Adrenal gland (tissue), 19 donors: ENCODE measurements at regions of chr6 and their contacts with region 1.

Region 1: DNA sequence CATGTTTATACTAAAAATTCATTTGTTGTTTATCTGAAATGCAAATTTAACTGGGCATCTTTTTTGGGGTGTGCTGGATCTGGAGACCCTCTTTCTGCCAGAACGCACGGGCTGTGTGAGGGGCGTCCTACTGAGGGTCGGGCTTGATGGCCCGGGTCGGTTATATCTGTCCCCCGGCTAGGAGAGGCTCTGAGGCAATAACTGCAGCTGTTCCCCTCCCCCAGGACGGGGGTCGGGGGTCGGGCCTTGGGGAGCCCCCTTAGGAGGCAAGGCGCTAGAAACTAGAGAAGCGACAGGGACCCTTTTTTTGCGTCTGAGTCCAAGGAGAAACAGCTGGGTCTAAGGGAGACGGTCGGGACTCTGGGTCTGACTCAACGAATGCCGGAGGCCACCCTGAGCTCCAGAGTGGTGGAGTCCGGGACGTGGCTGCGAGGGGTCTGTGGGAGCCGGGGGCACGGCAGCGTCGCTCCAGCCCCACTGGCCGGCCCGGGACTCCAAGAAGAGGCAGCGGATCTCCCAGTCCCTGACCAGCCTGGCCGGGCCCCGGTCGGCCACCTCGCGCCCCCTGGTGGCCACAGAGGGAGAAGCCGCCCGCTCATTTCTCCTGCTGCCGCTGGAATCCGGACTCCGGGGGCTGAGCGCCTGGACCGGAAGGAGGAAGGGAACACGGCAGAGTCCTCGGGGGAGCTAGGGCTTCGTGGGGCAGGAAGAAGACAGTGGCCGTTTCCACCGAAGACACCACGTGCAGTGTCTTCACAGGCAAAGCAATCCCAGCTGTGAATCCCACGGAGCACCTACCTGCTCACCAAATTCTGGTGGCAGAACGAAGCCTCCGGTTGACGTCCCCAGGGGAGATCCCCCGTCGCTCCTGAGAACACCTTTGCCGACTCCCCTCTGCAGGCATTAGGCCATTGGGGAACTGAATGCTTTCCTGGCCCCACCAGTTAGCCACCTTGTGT is 24.0 kb upstream of the SCML4 start:
- DNase-seq: peak; percentile 82 to 92 (median 87)
- H3K4me3 ChIP-seq: peak overlapping the region in 2 of 4 donors; percentile 16 to 56
- H3K27ac ChIP-seq: no peak overlapping the region
- H3K4me1 ChIP-seq: peaks cover 0 to 11% of the 10 kb centered on the region in 2 donors
- H3K27me3 ChIP-seq: no peaks in the 10 kb centered on the region
- CTCF ChIP-seq: peak; percentile 84 to 99 (median 94)
- POLR2A ChIP-seq: no peak

Region 2: DNA sequence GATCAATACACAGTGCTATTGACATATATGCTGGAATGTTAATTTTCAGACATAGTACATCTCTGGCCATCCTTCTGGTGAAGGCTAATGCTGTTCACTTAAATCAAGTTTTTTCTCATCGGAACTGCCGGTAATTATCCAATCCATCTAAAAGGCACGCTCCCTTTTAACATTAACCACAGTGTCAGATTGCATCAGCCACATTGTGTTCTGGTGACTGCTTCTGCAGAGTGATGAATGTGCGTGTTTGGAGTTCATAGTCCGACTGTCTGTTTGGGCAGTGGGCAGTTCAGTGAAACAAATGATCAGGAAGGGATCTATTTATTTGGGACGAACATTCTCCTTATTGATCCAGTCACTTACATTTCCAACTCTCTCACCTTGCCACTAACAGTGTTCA is 308.7 kb before region 1 on chr6:
- intact Hi-C with region 1: no loop called
- DNase-seq: no peak
- H3K4me3 ChIP-seq: no peak overlapping the region
- H3K27ac ChIP-seq: no peak overlapping the region
- H3K4me1 ChIP-seq: no peaks in the 10 kb centered on the region
- H3K27me3 ChIP-seq: no peaks in the 10 kb centered on the region
- CTCF ChIP-seq: no peak
- POLR2A ChIP-seq: no peak

Region 3: GRCh38 chr6:107674995-107675738 is 173.0 kb before region 1 on chr6:
- intact Hi-C with region 1: loop called in 1 of 2 experiments (anchors 5 kb)
- DNase-seq: peak; percentile 83 to 90 (median 88)
- H3K4me3 ChIP-seq: peak overlapping the region in 1 of 4 donors; percentile 47
- H3K27ac ChIP-seq: peak overlapping the region in 3 of 5 donors; percentile 23 to 58 (median 57)
- H3K4me1 ChIP-seq: peaks cover 5 to 23% of the 10 kb centered on the region in 2 donors
- H3K27me3 ChIP-seq: no peaks in the 10 kb centered on the region
- CTCF ChIP-seq: peak in 5 of 6 experiments; percentile 78 to 98 (median 94)
- POLR2A ChIP-seq: no peak

Region 4: GRCh38 chr6:107704347-107705013 is 143.6 kb before region 1 on chr6:
- intact Hi-C with region 1: loop called in 1 of 2 experiments (anchors 10 kb)
- DNase-seq: peak in 4 of 7 donors; percentile 30 to 48 (median 41)
- H3K4me3 ChIP-seq: no peak overlapping the region
- H3K27ac ChIP-seq: no peak overlapping the region
- H3K4me1 ChIP-seq: no peaks in the 10 kb centered on the region
- H3K27me3 ChIP-seq: no peaks in the 10 kb centered on the region
- CTCF ChIP-seq: peak; percentile 71 to 91 (median 86)
- POLR2A ChIP-seq: no peak

Region 5: DNA sequence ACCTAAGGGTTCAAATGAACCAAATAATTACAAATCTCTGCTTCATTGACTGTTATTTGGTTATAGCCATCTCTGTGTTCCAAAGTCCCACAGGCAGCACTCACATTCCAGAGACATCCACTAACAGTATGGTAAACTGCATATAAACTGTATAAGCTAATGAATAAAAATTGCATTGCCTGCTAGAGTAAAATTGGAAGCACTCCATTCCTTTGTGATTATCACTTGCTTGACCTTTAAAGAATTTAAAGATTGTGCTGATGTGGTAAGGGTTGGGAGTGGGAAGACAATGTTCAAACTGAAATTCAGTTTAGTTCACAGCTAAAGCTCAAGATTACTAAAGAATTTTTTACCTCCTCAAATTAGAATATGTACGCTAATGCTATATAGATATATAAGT is 257.4 kb after region 1 on chr6:
- intact Hi-C with region 1: no loop called
- DNase-seq: no peak
- H3K4me3 ChIP-seq: no peak overlapping the region
- H3K27ac ChIP-seq: no peak overlapping the region
- H3K4me1 ChIP-seq: no peaks in the 10 kb centered on the region
- H3K27me3 ChIP-seq: no peaks in the 10 kb centered on the region
- CTCF ChIP-seq: no peak
- POLR2A ChIP-seq: no peak